GM13976 (cell line): ENCODE measurements at regions of chr9 and their contacts with region 1.

Region 1: GRCh38 chr9:68704814-68705530 is at the start of gene PIP5K1B:
- DNase-seq: peak; percentile 92
- CTCF ChIP-seq: peak; percentile 4

Region 2: GRCh38 chr9:68577774-68578591 is 127.0 kb before region 1 on chr9:
- in situ Hi-C with region 1: loop called (anchors 10 kb)
- DNase-seq: peak; percentile 39
- CTCF ChIP-seq: no peak

Region 3: DNA sequence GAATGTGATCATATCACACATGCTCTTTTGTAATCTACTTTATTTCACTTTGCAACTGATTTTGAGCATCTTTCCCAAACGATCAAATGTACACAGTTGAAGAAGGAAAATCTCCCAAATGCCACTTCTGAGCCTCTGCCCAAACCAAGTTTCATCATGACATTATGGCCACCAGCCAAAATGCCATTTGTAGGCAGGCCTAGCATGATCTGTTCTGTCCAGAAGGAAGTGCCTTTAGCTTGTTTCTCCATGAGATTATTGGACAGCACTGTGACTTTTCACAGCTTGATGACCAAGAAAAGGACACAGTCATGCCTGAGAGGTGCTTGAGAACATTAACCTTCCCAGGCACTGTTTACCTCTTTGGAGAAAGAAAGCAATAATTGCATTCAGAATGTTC is 73.2 kb before region 1 on chr9:
- in situ Hi-C with region 1: no loop called
- DNase-seq: no peak
- CTCF ChIP-seq: no peak

Region 4: DNA sequence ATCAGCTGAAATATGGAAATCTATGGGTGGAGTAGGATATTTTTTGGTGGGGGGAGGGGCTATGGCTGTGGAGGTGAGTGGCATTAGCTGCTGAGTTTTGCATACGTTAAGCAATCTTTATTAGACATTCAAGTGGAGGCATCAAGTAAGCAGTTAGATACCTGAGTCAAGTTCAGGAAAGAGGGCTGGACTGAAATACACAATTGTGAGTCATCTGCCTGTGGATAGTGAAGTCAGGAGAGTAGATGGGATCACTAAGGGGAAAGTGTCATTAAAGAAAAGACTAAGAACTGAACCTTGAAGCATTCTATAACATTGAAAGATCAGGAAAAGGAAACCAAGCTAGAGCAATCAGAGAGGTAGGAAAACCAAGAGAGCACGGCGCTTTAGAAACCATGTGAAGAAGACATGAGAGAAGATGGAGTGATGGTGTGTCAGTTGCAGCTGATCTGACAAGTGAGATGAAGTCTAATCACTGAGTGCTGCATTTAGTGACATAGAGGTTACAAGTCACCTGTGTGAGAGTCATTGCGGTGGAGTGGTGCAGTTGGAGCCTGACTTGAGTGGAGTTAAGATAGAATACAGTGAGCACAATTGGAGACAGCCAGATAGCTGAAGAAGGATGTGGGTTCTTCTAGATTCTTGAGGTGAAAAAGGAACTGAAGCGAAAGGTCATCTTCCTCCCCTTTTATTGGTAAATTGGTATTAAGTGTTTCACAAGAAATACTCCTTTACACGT is 88.8 kb after region 1 on chr9:
- in situ Hi-C with region 1: loop called (anchors 10 kb)
- DNase-seq: peak; percentile 47
- CTCF ChIP-seq: no peak

Region 5: GRCh38 chr9:69174616-69175463 is 469.9 kb after region 1 on chr9:
- in situ Hi-C with region 1: loop called (anchors 25 kb)
- DNase-seq: peak; percentile 77
- CTCF ChIP-seq: no peak